ENCODE measurements at regions of chr7 and their contacts with region 1.

Region 1: GRCh38 chr7:35185907-35186731 is 67.8 kb downstream of the TBX20 start:
- DNase-seq: peak; percentile 12
- H3K4me3 Mint-ChIP-seq: peak overlapping the region; percentile 69
- H3K27ac Mint-ChIP-seq: no peak overlapping the region
- H3K4me1 Mint-ChIP-seq: peaks cover 14% of the 10 kb centered on the region
- H3K27me3 Mint-ChIP-seq: peaks cover 25% of the 10 kb centered on the region

Region 2: DNA sequence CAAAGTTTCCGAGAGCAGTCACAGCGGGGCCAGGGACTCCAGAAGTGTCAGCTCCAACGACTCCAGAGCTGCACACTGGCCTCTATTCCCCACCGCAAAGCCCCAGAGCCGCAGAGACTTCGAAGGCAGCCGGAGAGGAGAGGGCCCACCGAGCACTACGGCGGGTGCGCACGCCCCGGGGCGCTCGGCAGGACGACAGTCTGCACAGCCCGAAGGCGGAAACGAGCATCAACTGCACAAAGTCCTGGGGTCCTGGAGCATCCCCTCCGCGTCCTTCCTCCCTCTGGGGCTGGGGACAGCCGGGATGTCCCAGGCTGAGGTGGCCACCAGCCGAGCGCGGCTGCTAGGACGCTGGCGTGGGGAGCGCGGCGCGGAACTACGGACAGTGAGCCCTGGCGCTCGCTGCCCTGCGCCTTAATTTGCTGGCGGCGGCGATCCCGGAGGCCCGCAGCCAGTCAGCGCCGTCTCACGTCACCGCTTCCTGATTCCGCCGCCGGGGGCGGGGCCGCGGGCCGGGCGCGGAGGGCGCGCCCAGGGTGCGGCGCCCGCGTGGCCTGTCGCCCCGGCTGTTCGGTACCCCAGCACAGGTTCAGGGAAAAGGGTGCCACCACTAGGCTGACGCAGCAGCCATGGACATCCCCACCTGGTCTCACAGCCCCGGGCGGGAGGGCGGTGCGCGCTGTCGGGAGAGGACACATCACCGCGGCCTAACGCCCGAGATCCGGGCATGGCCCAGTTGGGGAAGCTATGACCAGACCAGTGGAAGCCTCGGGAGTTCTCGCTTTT is 67.8 kb after region 1 on chr7 and contains the start of gene TBX20:
- CTCF ChIA-PET with region 1: no interaction called
- POLR2A ChIA-PET with region 1: no interaction called
- intact Hi-C with region 1: loop called (anchors 10 kb)
- DNase-seq: peak; percentile 44
- H3K4me3 Mint-ChIP-seq: peak within 1 kb of the TSS; percentile 46
- H3K27ac Mint-ChIP-seq: no peak within 1 kb of the TSS
- H3K4me1 Mint-ChIP-seq: peaks cover 14% of the 10 kb centered on the region
- H3K27me3 Mint-ChIP-seq: peaks cover 82% of the 10 kb centered on the region
- total RNA-seq, gene TBX20: 0.15 TPM in 1 of 2 experiments, not detected in the other

Region 3: DNA sequence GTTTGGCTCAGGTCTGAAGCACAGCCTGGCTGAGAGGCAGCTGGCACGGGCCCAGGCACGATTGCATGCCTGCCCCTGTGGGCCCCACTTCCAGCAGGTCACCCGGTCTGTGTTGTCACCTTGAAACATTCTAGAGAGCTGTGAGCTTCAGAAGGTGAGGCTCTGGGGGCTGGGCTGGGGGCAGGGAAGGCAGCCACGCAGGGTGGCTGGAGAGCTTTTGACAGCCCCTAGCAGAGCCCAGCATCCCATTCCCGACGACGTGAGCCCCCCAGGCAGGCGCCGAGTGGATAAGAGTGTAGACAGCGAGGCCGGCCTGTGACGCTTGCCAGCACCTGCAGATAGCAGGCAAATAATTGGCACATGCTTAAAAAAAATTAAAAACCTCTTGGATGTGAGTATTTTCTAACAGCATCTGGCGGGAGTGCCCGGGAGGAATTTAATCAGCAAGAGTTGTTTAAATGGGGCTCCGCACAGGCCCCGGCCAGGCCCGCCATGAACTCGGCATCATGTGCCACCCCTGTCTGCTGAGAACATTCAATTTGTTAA is 279.7 kb after region 1 on chr7:
- CTCF ChIA-PET with region 1: no interaction called
- POLR2A ChIA-PET with region 1: no interaction called
- intact Hi-C with region 1: no loop called
- DNase-seq: no peak
- H3K4me3 Mint-ChIP-seq: no peak overlapping the region
- H3K27ac Mint-ChIP-seq: no peak overlapping the region
- H3K4me1 Mint-ChIP-seq: no peaks in the 10 kb centered on the region
- H3K27me3 Mint-ChIP-seq: peaks cover 16% of the 10 kb centered on the region

Region 4: DNA sequence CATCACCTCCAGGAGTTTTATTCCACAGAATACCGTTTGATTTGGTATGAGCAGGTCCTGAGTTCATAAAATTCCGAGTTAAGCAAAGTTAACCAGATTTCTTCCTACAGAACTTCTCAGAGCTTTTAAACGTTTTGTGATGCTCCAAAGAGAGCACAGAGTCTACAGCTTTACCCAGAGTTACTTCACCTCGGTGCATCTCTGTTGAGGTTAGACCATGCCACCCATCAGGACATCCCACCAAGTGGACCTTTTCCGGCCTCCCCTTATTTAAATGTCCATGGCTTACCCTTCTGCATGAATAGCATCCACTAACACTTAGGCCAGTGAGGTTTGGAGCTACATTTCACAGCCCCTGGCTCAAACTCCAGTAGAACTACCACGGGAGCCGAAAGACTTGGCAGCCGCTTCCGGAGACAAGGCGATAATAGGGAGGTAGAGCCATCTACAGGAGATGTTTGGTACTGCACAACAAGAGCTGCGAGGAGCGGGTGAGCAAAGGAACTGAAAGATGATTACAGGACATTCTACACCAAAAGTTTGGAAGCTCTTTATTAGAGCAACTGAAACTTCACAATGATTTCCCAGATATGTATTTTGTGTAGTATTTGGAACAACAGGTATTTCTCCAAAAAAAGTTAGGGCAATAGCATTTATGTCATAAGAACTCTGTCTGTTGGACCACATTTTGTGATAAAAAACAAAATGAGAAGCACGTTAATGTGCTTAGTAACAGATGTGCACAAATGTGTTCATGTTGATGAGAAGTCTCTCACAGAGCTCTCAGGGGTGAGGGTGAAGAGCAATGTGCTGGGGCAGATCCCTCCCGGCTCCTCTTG is 334.1 kb after region 1 on chr7:
- CTCF ChIA-PET with region 1: no interaction called
- POLR2A ChIA-PET with region 1: no interaction called
- intact Hi-C with region 1: loop called (anchors 5 kb)
- DNase-seq: peak; percentile 64
- H3K4me3 Mint-ChIP-seq: no peak overlapping the region
- H3K27ac Mint-ChIP-seq: no peak overlapping the region
- H3K4me1 Mint-ChIP-seq: no peaks in the 10 kb centered on the region
- H3K27me3 Mint-ChIP-seq: peaks cover 8% of the 10 kb centered on the region